ENCODE measurements at regions of chr1 and their contacts with region 1.

Region 1: DNA sequence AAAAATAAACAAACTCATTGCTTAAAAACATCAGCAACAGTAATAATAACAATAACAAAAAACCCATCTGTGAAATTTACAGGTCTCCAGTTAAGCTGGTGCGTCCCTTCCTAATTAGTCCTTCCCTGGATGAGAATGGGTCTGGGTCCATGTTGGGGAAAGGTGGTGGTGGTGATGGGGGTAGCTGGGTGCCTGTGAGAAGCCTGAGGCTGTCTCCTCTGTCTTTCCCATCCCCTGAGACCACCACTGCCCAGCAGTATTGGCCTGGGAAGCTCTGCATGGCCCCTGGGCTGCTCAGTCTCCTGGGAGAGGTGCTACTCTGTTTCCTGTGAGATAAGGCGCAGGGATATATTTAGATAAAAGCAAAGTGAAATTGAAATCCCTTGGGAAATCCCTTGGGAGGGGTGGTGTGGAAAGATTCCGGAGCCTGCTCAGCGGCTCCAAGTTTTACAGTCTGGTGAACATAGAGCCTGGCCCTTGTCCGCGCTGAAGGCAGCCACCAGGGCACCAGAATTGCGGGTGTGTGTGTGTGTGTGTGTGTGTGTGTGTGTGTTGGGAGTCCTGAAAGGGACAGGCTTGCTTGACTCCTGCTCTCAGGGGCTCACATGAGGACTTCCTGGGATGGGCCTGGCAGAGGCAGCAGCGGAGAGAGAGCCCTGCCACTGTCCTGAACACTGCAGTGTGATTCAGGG is 150.2 kb downstream of the FOXD2 start:
- DNase-seq: no peak
- ATAC-seq: no peak
- H3K4me3 ChIP-seq: no peak overlapping the region
- H3K27ac ChIP-seq: no peak overlapping the region
- H3K4me1 ChIP-seq: no peaks in the 10 kb centered on the region
- H3K27me3 ChIP-seq: peaks cover 46% of the 10 kb centered on the region
- CTCF ChIP-seq: no peak

Region 2: DNA sequence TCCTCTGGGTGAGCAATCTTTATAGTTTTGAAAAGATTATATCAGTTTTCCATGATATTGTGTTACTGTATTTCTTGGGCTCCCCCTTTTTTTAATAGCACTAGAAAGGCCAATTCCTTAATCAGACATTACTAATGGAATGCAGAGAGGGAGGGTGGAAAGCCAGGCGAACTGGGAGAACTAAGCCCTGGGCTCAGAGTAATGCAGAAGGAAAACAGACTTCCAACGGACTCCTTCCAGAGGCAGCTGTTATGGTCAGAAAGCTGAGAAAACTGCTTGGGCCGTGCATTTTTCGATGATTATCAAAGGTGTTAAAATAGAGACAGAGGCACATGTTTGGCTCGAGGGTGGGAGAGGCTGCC is 56.2 kb after region 1 on chr1:
- CTCF ChIA-PET with region 1: no interaction called
- POLR2A ChIA-PET with region 1: no interaction called
- intact Hi-C with region 1: loop called (anchors 10 kb)
- DNase-seq: no peak
- ATAC-seq: no peak
- H3K4me3 ChIP-seq: no peak overlapping the region
- H3K27ac ChIP-seq: no peak overlapping the region
- H3K4me1 ChIP-seq: no peaks in the 10 kb centered on the region
- H3K27me3 ChIP-seq: no peaks in the 10 kb centered on the region; the same call in 1 of the 2 replicates
- CTCF ChIP-seq: no peak

Measured in PC-3 (cell line).